PC-3 (cell line): ENCODE measurements at regions of chr5 and their contacts with region 1.

Region 1: DNA sequence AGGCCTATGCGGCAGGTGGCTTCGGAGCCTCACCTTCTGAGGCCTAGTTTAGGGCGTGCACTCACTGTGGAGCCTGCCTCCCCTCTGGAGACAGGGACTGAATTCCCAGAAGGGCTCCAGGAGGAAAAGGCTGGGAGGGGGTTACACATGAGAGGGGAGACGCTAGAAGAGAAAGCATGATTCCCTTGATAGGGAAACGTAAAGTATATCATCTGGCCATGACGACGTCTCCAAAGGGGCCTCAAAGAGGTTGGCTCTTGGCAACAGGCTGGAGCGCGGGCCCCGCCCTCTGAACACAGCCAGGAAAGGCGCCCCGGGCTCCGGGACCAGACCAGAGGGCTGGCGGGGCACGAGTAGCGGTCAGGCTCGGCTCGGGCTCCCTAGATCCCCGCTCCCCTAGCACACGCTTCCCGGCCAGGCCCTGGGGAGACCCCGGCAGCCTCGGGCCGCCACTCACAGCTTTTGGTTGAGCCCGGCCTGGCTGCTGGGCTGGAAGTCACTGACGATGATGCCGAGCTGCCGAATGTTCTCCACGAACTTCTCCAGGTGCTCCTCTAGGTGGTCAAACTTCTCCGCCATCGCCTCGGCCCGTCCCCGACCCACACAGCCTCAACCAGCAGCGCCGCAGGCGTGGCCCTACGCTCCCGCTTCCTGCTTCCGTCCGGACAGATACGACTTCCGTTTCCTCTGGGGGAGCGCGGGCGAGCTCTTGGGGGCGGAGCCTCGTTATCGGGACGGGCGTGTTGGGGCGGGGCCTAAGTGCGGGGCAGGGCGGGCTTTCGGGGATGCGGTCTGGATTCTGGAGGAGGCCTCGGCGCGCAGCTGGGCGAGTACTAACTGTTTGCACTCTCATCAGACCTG is at the start of gene MED10:
- DNase-seq: peak; percentile 100
- ATAC-seq: peak; percentile 96
- H3K4me3 ChIP-seq: peak within 1 kb of the TSS; percentile 77
- H3K27ac ChIP-seq: peak within 1 kb of the TSS; percentile 56
- H3K4me1 ChIP-seq: peaks cover 23% of the 10 kb centered on the region
- H3K27me3 ChIP-seq: no peaks in the 10 kb centered on the region
- CTCF ChIP-seq: no peak
- total RNA-seq, gene MED10: 94.0 and 102 TPM in 2 replicates

Region 2: GRCh38 chr5:5492087-5492933 is 885.8 kb before region 1 on chr5:
- CTCF ChIA-PET with region 1: no interaction called
- POLR2A ChIA-PET with region 1: interaction called, 8 read pairs
- intact Hi-C with region 1: loop called (anchors 10 kb)
- DNase-seq: peak; percentile 72
- ATAC-seq: peak; percentile 53
- H3K4me3 ChIP-seq: no peak overlapping the region
- H3K27ac ChIP-seq: no peak overlapping the region
- H3K4me1 ChIP-seq: no peaks in the 10 kb centered on the region
- H3K27me3 ChIP-seq: no peaks in the 10 kb centered on the region
- CTCF ChIP-seq: peak; percentile 92

Region 3: GRCh38 chr5:6365142-6365976 is 12.8 kb before region 1 on chr5:
- CTCF ChIA-PET with region 1: no interaction called
- POLR2A ChIA-PET with region 1: interaction called, 11 read pairs
- intact Hi-C with region 1: no loop called
- DNase-seq: peak; percentile 79
- ATAC-seq: peak; percentile 97
- H3K4me3 ChIP-seq: no peak overlapping the region
- H3K27ac ChIP-seq: peak overlapping the region; percentile 13; the same call in 1 of the 2 replicates
- H3K4me1 ChIP-seq: peaks cover 15% of the 10 kb centered on the region
- H3K27me3 ChIP-seq: no peaks in the 10 kb centered on the region
- CTCF ChIP-seq: no peak

Region 4: DNA sequence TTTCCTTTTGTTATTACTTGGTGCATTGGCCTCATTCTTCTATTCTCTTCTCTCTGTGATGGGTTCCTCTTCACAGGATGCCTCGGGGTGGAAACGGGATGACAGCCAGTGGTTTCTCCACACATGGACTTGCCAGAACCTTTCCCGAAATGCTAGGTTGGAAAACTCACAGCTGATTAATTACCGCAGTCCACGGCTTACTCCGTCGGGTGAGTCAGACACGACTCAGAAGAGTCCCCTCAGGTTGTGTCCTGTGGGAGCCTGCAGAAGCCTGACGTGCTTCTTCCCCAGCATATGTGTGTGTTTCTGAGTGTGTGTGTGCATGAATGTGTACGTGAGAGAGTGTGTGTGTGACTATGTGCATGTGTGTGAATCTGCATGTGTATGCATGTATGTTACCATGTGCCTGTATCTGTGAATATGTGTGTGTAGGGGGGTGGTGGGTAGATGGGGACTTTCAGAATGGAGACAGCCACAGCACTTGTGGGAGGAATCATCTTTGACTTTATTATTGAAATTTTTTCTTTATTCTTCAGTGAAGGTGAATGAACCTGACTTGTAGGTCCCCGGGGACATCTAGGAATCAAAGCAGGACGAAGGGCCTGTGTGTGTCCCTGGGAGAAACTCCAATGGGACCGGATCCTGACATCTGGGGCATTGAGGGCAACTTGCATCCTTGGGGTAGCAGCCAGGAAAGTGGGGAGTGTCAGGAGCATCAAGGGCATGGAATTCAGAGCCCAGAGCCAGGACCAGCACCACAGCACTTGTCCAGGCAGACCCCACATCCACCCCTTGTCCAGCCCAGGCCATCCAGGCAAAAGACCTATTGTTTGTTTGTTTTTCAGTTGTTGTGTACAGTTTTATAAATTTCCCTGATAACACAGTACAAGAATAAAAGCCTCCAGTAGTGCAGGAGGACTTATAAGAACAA is 22.1 kb after region 1 on chr5:
- CTCF ChIA-PET with region 1: no interaction called
- POLR2A ChIA-PET with region 1: no interaction called
- intact Hi-C with region 1: no loop called
- DNase-seq: peak; percentile 99
- ATAC-seq: peak; percentile 93
- H3K4me3 ChIP-seq: no peak overlapping the region
- H3K27ac ChIP-seq: 0 out of 2 replicates have a peak overlapping the region, but pooled peaks have one; percentile 1
- H3K4me1 ChIP-seq: peaks cover 24% of the 10 kb centered on the region
- H3K27me3 ChIP-seq: no peaks in the 10 kb centered on the region
- CTCF ChIP-seq: no peak

Region 5: DNA sequence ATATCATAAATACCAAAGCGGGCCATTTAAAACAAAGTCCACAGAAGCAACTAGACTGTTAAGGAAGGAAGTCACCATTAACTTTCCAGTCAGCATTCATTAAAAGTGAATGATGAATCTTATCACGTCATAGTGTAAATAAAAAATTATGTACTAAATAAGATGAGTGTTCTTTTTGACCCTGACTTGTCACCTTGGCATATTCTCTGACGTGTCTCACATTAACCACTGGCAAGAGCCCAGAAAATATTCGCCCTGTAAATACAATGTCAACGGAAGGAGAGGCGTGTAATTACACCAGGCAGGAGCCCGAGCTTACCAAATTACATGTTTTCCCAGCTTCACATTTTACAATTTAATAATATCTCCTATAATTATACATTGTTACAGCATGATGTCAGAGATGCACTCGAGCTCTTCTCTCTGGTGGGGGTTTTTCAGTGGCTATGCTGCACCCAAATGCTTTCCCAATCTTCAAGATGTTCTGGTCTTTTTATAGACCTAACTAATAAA is 41.3 kb after region 1 on chr5:
- CTCF ChIA-PET with region 1: no interaction called
- POLR2A ChIA-PET with region 1: no interaction called
- intact Hi-C with region 1: loop called (anchors 1 kb)
- DNase-seq: peak; percentile 97
- ATAC-seq: peak; percentile 49
- H3K4me3 ChIP-seq: no peak overlapping the region; the same call in 1 of the 2 replicates
- H3K27ac ChIP-seq: peak overlapping the region; percentile 55
- H3K4me1 ChIP-seq: peaks cover 36% of the 10 kb centered on the region
- H3K27me3 ChIP-seq: no peaks in the 10 kb centered on the region
- CTCF ChIP-seq: no peak

Region 6: GRCh38 chr5:6504677-6505411 is 126.7 kb after region 1 on chr5:
- CTCF ChIA-PET with region 1: no interaction called
- POLR2A ChIA-PET with region 1: interaction called, 24 read pairs
- intact Hi-C with region 1: no loop called
- DNase-seq: peak; percentile 99
- ATAC-seq: peak; percentile 92
- H3K4me3 ChIP-seq: no peak overlapping the region
- H3K27ac ChIP-seq: peak overlapping the region; percentile 70
- H3K4me1 ChIP-seq: peaks cover 19% of the 10 kb centered on the region
- H3K27me3 ChIP-seq: no peaks in the 10 kb centered on the region
- CTCF ChIP-seq: no peak

Region 7: DNA sequence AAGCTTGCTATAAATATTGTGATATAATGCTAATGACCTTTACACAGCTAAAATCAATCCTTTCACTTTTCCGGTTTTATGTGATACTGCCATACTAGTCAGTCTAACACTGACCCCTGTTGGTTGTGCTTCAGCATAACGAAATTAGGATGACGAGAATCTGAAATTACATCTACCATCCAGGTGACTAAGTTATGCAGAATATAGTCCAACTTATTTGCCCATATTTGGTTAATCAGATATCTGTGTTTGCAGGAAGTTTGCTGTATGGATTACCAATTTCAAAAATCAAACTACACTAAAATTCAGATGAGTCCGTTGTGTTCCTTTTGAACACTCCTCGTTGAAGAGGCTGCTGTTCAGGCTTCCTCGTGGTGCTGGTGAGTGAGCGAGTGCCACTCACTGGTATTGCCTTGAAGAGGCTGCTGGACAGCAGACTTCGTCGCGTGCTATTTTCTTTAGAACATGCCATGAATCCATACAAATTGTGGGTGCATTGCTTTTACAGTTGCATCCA is 367.6 kb after region 1 on chr5:
- CTCF ChIA-PET with region 1: no interaction called
- POLR2A ChIA-PET with region 1: no interaction called
- intact Hi-C with region 1: loop called (anchors 10 kb)
- DNase-seq: peak; percentile 87
- ATAC-seq: peak; percentile 83
- H3K4me3 ChIP-seq: no peak overlapping the region
- H3K27ac ChIP-seq: no peak overlapping the region
- H3K4me1 ChIP-seq: peaks cover 5% of the 10 kb centered on the region
- H3K27me3 ChIP-seq: no peaks in the 10 kb centered on the region
- CTCF ChIP-seq: peak; percentile 97